ENCODE measurements at regions of chr13 and their contacts with region 1.

Region 1: DNA sequence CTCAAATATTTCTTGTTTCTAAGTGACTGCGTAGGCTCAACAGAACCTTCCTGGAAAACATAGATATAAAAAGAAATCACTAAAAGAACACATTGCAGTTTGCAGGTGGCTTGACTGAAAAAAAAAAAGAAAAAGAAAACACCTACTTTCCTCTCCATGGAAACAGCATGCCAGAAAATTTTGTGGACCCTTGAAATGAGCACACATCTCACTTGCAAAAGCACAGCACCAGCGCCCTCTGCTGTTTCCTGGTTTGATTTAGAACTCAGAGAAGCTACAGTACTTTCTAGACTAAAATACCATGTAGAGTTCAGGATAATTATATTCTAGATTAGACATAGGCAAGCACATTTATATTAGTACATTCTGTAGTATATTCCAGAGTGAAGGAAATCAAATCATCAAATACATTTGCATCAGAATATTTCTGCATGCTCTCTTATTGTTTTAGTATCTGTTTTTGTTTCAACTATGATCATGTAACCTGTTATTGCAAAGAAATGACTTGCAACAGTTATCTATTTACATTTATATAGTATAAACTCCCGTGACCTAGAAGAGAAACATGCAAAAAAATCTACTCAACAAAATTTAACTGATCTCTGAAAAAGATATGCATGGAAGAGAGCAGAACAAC is 22.3 kb upstream of the XPO4 start:
- H3K4me3 ChIP-seq: no peak overlapping the region
- H3K27ac ChIP-seq: no peak overlapping the region
- H3K4me1 ChIP-seq: no peaks in the 10 kb centered on the region
- CTCF ChIP-seq: peak; percentile 40; the same call in 1 of the 2 replicates

Region 2: DNA sequence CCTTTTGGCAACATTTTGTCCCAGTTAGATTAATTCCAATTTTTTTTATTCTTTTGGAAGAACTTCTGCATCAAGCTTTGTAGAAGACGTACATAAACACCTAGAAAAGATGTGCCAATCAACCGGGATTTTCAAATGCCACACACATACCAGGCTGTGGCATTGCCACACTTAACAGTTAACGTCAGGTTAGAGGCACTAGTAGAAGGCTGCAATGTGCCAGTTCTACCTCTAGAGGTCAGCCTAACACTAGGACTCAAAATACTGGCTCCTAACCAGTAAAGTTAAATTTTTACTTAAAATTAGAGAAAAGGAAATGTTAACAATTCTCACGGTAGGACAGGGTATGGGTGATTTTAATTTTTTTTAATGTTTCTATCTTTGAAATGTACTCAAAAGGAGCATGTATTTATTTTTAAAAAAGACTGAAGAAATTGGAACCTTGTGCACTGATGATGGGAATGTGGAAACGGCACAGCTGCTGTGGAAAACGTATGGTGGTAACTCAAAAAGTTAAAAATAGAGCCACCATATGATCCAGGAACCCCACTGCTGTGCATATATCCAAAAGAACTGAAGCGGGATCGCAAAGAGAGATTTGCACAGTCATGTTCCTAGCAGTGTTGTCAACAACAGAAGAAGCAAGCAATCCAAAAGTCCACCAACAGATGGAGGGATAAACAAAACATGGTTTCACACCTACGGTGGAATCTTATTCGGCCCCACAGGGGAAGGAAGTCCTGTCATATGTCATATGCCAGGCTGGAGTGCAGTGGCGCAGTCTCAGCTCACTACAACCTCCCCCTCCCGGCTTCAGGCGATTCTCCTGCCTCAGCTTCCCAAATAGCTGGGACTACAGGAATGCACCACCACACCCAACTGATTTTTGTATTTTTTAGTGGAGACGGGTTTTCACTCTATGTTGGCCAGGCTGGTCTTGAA is 429.5 kb before region 1 on chr13:
- CTCF ChIA-PET with region 1: interaction called, 58 read pairs
- POLR2A ChIA-PET with region 1: no interaction called
- H3K4me3 ChIP-seq: no peak overlapping the region
- H3K27ac ChIP-seq: no peak overlapping the region
- H3K4me1 ChIP-seq: no peaks in the 10 kb centered on the region
- CTCF ChIP-seq: peak; percentile 43

Region 3: DNA sequence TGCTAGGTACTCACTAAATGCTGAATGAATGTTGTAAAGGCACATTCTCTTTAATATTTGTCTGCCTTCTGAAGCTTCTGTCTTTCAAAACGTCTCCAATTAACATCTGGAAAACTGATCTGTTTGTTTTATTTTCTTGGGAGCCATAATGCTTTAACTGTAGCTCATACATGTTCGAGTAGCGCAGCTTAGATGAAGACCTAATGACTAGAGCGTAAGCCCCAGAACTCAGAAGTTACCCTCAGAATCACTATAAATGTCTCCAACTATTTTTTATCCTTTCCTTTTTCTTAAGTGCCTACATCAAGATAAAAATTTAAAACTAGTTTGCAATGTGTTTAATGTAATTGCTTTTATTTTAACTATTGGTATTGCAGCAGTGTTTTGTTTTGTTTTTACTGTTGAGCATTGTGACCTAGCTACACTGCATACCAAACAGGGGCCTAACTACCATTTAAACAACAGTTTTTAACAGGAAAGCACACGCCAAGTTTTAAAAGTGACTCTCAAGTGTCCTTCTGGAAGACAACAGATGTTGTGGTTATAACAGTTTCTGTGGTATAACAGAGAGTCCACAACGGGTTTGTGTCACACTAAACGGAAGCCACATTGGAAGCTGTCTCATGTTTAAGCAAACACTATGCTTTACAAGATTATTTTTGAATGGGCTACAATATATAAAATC is 293.6 kb after region 1 on chr13:
- CTCF ChIA-PET with region 1: no interaction called
- POLR2A ChIA-PET with region 1: no interaction called
- H3K4me3 ChIP-seq: no peak overlapping the region
- H3K27ac ChIP-seq: no peak overlapping the region
- H3K4me1 ChIP-seq: no peaks in the 10 kb centered on the region
- CTCF ChIP-seq: no peak

Measured in HEK293 (cell line).